SK-N-SH (cell line): ENCODE measurements at regions of chr17 and their contacts with region 1.

Region 1: DNA sequence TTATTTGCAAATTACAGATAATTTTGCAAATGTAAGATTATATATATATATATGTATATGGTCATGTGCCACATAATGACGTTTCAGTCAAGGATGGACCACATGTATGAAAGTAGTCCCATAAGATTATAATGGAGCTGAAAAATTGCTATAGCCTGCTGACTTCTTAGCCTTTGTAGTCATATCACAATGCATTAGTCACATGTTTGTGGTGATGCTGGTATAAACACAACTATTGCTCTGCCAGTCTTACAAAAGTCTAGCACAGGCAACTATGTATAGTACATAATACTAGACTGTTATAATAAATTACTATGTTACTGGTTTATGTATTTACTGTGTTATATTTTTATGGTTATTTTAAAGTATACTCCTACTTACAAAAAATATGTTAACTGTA is 444.3 kb downstream of the KCNJ2 start:
- DNase-seq: no peak
- H3K4me3 ChIP-seq: no peak overlapping the region
- H3K27ac ChIP-seq: no peak overlapping the region
- H3K4me1 ChIP-seq: no peaks in the 10 kb centered on the region
- H3K27me3 ChIP-seq: no peaks in the 10 kb centered on the region
- CTCF ChIP-seq: no peak
- EP300 ChIP-seq: no peak
- RAD21 ChIP-seq: no peak

Region 2: DNA sequence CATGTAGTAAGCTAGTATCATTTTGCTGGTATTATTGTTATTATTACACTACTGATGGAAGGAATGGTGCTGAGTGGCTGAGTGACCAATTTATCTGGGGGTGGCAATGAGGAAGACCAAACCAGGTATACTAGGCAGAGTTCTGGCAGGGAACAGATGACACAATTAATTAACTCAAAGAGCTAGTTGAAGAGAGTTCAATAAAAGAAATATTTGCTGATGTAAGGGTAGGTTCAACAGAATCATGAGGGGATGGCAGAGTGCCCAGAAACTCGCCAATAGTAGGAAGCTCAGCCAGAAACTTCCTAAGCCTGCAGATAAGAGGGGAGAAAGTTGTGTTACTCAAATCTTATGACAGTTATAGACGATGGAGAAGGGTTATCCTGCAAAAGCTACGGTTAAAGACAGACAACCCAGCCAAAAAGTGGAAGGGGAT is 91.8 kb before region 1 on chr17:
- CTCF ChIA-PET with region 1: no interaction called
- POLR2A ChIA-PET with region 1: no interaction called
- DNase-seq: no peak
- H3K4me3 ChIP-seq: no peak overlapping the region
- H3K27ac ChIP-seq: no peak overlapping the region
- H3K4me1 ChIP-seq: no peaks in the 10 kb centered on the region
- H3K27me3 ChIP-seq: no peaks in the 10 kb centered on the region
- CTCF ChIP-seq: no peak
- EP300 ChIP-seq: no peak
- RAD21 ChIP-seq: no peak

Region 3: DNA sequence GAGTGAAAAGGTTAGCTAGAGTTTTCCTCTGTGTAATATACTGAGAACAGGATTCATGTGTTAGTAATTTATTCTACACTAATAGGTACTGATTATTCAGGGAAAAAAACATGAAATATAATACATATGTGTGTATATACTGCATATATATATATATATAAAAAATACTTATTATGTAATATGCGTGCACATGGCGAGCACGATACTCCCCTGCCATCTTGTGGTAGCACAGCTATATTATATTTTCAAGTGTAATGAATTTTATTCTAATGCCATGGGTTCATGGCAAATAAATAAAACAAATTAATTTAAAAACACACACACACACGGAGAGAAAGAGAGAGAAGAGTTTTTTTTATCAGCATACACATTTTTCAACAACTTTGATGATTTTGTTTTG is 16.2 kb after region 1 on chr17:
- CTCF ChIA-PET with region 1: interaction called, 12 read pairs
- POLR2A ChIA-PET with region 1: no interaction called
- DNase-seq: peak; percentile 43
- H3K4me3 ChIP-seq: no peak overlapping the region
- H3K27ac ChIP-seq: no peak overlapping the region
- H3K4me1 ChIP-seq: no peaks in the 10 kb centered on the region
- H3K27me3 ChIP-seq: peaks cover 6% of the 10 kb centered on the region; the same call in 1 of the 2 replicates
- CTCF ChIP-seq: peak; percentile 56
- EP300 ChIP-seq: no peak
- RAD21 ChIP-seq: peak; percentile 84